AG04450 (cell line): ENCODE measurements at regions of chr14 and their contacts with region 1.

Region 1: DNA sequence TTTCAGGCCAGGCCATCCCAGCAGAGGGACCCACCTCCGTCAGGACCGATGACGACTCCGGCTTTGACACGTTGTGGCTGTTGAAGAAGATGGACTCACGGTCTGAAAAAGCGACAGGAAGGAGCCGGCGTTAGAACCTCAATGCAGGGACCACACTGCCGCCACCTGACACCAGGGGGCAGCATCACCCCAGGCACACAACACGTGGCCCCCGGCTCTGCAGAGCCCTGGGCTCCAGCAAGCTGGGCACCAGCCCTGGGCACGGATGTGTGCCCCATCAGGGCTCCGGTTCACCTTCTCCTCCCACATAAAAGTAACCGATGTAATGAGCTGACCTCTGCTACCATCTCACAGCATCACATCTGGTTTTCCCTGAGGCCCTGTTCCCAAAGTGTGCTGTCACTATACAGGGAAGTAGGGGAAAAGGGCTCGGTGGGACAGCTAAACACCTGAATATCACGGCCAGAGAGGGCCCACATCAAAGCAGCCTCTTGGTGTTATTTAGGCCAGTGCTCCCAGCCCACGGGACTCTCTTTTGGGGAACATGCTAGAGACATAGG is 29.0 kb downstream of the CHGA start:
- DNase-seq: peak; percentile 18
- H3K4me3 ChIP-seq: no peak overlapping the region
- H3K27ac ChIP-seq: no peak overlapping the region
- H3K27me3 ChIP-seq: no peaks in the 10 kb centered on the region
- CTCF ChIP-seq: peak; percentile 92

Region 2: GRCh38 chr14:93132470-93133065 is 180.6 kb after region 1 on chr14:
- CTCF ChIA-PET with region 1: interaction called, 36 read pairs
- POLR2A ChIA-PET with region 1: no interaction called
- DNase-seq: no peak
- H3K4me3 ChIP-seq: no peak overlapping the region
- H3K27ac ChIP-seq: no peak overlapping the region
- H3K27me3 ChIP-seq: peaks cover 12% of the 10 kb centered on the region
- CTCF ChIP-seq: peak; percentile 55

Region 3: GRCh38 chr14:93137864-93138263 is 185.9 kb after region 1 on chr14:
- CTCF ChIA-PET with region 1: interaction called, 36 read pairs
- POLR2A ChIA-PET with region 1: no interaction called
- DNase-seq: no peak
- H3K4me3 ChIP-seq: no peak overlapping the region
- H3K27ac ChIP-seq: no peak overlapping the region
- H3K27me3 ChIP-seq: peaks cover 7% of the 10 kb centered on the region
- CTCF ChIP-seq: no peak

Region 4: GRCh38 chr14:93173943-93174395 is 222.0 kb after region 1 on chr14:
- CTCF ChIA-PET with region 1: interaction called, 20 read pairs
- POLR2A ChIA-PET with region 1: no interaction called
- DNase-seq: no peak
- H3K4me3 ChIP-seq: no peak overlapping the region
- H3K27ac ChIP-seq: no peak overlapping the region
- H3K27me3 ChIP-seq: no peaks in the 10 kb centered on the region
- CTCF ChIP-seq: no peak

Region 5: GRCh38 chr14:93184388-93185353 is 232.7 kb after region 1 on chr14 and contains the starts of genes LYSET and MOAP1:
- CTCF ChIA-PET with region 1: interaction called, 20 read pairs
- POLR2A ChIA-PET with region 1: no interaction called
- DNase-seq: peak; percentile 36
- H3K4me3 ChIP-seq: peak within 1 kb of the TSS; percentile 98
- H3K27ac ChIP-seq: peak within 1 kb of the TSS; percentile 69
- H3K27me3 ChIP-seq: no peaks in the 10 kb centered on the region
- CTCF ChIP-seq: no peak
- polyA plus RNA-seq, gene LYSET: 12.2 and 15.6 TPM in 2 replicates
- polyA plus RNA-seq, gene MOAP1: 16.7 and 21.0 TPM in 2 replicates

Region 6: GRCh38 chr14:93200553-93200952 is 248.6 kb after region 1 on chr14:
- CTCF ChIA-PET with region 1: no interaction called
- POLR2A ChIA-PET with region 1: no interaction called
- DNase-seq: no peak
- H3K4me3 ChIP-seq: no peak overlapping the region
- H3K27ac ChIP-seq: no peak overlapping the region
- H3K27me3 ChIP-seq: no peaks in the 10 kb centered on the region
- CTCF ChIP-seq: no peak